ENCODE measurements at regions of chr3 and their contacts with region 1.

Region 1: GRCh38 chr3:32934150-32934742 is 17.2 kb upstream of the CCR4 start:
- DNase-seq: peak; percentile 42
- H3K4me3 Mint-ChIP-seq: no peak overlapping the region
- H3K27ac Mint-ChIP-seq: no peak overlapping the region
- H3K4me1 Mint-ChIP-seq: peaks cover 14% of the 10 kb centered on the region
- H3K27me3 Mint-ChIP-seq: no peaks in the 10 kb centered on the region
- CTCF ChIP-seq: peak; percentile 67

Region 2: DNA sequence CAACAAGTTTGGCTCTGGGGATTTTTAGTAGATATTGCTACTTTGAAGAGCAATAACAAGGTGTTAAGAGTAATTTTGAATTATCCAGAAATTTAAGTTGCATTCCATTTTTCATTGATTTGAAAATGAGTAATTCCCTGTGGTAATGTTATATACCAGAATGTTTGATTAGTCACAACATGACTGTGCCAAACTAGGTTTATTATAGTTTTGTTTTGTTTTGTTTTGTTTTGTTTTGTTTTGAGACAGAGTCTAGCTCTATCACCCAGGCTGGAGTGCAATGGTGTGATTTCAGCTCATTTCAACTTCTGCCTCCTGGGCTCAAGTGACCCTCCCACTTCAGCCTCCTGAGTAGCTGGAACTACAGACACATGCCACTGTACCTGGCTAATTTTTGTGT is 208.5 kb before region 1 on chr3:
- CTCF ChIA-PET with region 1: interaction called, 23 read pairs
- POLR2A ChIA-PET with region 1: no interaction called
- intact Hi-C with region 1: no loop called
- DNase-seq: peak; percentile 5
- H3K4me3 Mint-ChIP-seq: no peak overlapping the region
- H3K27ac Mint-ChIP-seq: no peak overlapping the region
- H3K4me1 Mint-ChIP-seq: no peaks in the 10 kb centered on the region
- H3K27me3 Mint-ChIP-seq: no peaks in the 10 kb centered on the region
- CTCF ChIP-seq: no peak

Region 3: GRCh38 chr3:32733631-32734229 is 200.5 kb before region 1 on chr3:
- CTCF ChIA-PET with region 1: interaction called, 77 read pairs
- POLR2A ChIA-PET with region 1: interaction called, 4 read pairs
- intact Hi-C with region 1: loop called (anchors 1 kb)
- DNase-seq: peak; percentile 45
- H3K4me3 Mint-ChIP-seq: no peak overlapping the region
- H3K27ac Mint-ChIP-seq: no peak overlapping the region
- H3K4me1 Mint-ChIP-seq: no peaks in the 10 kb centered on the region
- H3K27me3 Mint-ChIP-seq: no peaks in the 10 kb centered on the region
- CTCF ChIP-seq: peak; percentile 49

Region 4: GRCh38 chr3:32913790-32914446 is 20.3 kb before region 1 on chr3:
- CTCF ChIA-PET with region 1: interaction called, 19 read pairs
- POLR2A ChIA-PET with region 1: interaction called, 3 read pairs
- intact Hi-C with region 1: no loop called
- DNase-seq: peak; percentile 96
- H3K4me3 Mint-ChIP-seq: no peak overlapping the region
- H3K27ac Mint-ChIP-seq: peak overlapping the region; percentile 87
- H3K4me1 Mint-ChIP-seq: peaks cover 13% of the 10 kb centered on the region
- H3K27me3 Mint-ChIP-seq: no peaks in the 10 kb centered on the region
- CTCF ChIP-seq: no peak

Measured in MCF 10A (cell line).